Activated naive CD4-positive, alpha-beta T cell treated with anti-CD3 and anti-CD28 coated beads, Interleukin-2, amount 10 ng/mL, durations not matched to agents 7 days and 5 days (primary cell): ENCODE measurements at regions of chr1 and their contacts with region 1.

Region 1: GRCh38 chr1:167059045-167059808 is 30.9 kb downstream of the GPA33 start:
- DNase-seq: peak; percentile 81
- H3K4me3 Mint-ChIP-seq: no peak overlapping the region
- H3K27ac Mint-ChIP-seq: no peak overlapping the region
- H3K4me1 Mint-ChIP-seq: peaks cover 7% of the 10 kb centered on the region
- H3K27me3 Mint-ChIP-seq: no peaks in the 10 kb centered on the region

Region 2: GRCh38 chr1:166875734-166876539 is 183.3 kb before region 1 on chr1 and contains the start of gene TADA1:
- CTCF ChIA-PET with region 1: interaction called, 146 read pairs
- DNase-seq: peak; percentile 99
- H3K4me3 Mint-ChIP-seq: peak within 1 kb of the TSS; percentile 97
- H3K27ac Mint-ChIP-seq: peak within 1 kb of the TSS; percentile 99
- H3K4me1 Mint-ChIP-seq: peaks cover 55% of the 10 kb centered on the region
- H3K27me3 Mint-ChIP-seq: peaks cover 6% of the 10 kb centered on the region

Region 3: DNA sequence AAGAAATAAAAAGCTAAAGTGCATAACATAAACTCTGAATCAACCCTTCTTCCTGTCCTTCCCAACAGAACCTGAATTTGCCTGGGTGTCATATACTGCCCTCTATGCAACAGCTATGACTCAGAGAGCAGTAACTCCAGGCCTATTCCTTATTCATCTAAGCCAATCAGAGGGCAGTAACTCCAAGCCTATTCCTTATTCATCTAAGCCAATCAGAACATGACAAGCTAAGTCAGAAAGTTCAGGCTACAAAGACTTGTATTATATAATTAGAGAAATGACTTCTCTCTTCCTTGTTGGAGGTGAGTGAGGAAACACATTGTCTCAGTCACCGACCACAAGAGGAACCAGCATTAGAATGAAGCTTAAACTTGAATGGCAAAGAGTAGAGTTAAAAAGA is 157.0 kb before region 1 on chr1:
- CTCF ChIA-PET with region 1: interaction called, 682 read pairs
- DNase-seq: no peak
- H3K4me3 Mint-ChIP-seq: no peak overlapping the region
- H3K27ac Mint-ChIP-seq: no peak overlapping the region
- H3K4me1 Mint-ChIP-seq: peaks cover 14% of the 10 kb centered on the region
- H3K27me3 Mint-ChIP-seq: peaks cover 25% of the 10 kb centered on the region

Region 4: DNA sequence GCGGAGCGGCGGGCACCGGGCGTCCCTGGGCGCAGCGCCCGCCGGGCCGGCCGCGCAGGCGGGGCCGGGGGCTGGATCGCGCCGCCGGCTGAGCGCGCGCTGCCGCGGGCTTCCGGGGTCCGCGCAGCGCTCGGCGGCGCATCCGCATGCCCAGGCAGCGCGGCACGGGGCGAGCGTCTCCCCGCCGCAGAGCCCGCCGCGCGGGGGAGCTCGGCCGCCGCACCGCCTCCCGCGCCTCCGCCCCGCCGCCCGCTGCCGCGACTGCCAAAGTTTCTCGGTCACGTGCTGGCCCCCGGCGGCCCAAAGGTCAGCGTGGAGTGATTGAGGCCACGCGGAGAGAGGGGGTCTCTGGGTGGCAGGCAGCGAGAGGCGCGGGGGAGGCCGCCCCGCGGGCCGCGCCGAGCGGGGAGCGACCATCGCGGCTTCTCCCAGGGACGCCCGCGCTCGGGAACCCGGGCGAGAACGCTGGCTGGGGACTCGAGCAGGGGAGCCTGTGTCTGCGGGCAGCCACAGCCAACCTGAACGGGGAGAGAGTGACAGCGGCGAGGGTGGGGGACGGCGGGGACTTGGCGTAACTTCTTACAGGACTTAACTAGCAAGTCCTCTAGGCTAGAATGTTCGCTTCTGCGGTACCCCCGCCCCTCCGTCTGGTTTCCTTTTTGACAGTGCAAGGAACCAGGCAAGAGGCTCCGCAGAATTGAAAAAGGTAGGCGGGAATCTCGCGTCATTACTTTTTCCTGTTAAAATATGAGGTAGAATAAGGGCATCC is 83.7 kb before region 1 on chr1 and contains the start of gene ILDR2:
- CTCF ChIA-PET with region 1: interaction called, 28 read pairs
- DNase-seq: peak; percentile 77
- H3K4me3 Mint-ChIP-seq: peak within 1 kb of the TSS; percentile 74
- H3K27ac Mint-ChIP-seq: peak within 1 kb of the TSS; percentile 2
- H3K4me1 Mint-ChIP-seq: peaks cover 44% of the 10 kb centered on the region
- H3K27me3 Mint-ChIP-seq: peaks cover 52% of the 10 kb centered on the region

Region 5: DNA sequence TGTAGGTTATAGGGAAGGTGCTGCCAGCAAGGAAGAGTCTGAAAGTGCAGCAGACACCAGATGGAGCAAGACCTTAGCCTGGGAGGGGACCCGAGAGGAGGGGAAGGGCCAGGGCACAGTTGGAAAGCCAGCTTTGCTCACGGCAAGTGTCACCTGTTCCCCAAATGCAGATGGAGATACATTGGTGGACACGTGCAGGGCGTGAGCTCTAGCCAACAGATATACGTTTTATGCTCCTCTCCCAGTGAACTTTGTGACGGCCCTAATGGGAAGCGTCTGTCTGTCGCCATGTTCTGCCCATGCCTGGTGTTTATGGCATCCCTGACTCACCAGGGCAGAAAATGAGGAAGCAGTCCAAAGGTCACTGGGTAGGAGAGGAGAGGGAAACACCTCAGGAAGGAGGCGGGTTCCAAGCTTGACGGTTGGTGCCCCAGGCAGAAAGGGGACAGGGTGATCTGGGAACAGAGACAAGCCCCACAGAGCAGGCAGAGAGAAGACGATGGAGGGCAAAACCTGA is 23.3 kb after region 1 on chr1:
- CTCF ChIA-PET with region 1: interaction called, 10 read pairs
- DNase-seq: no peak
- H3K4me3 Mint-ChIP-seq: no peak overlapping the region
- H3K27ac Mint-ChIP-seq: no peak overlapping the region
- H3K4me1 Mint-ChIP-seq: no peaks in the 10 kb centered on the region
- H3K27me3 Mint-ChIP-seq: peaks cover 16% of the 10 kb centered on the region

Region 6: DNA sequence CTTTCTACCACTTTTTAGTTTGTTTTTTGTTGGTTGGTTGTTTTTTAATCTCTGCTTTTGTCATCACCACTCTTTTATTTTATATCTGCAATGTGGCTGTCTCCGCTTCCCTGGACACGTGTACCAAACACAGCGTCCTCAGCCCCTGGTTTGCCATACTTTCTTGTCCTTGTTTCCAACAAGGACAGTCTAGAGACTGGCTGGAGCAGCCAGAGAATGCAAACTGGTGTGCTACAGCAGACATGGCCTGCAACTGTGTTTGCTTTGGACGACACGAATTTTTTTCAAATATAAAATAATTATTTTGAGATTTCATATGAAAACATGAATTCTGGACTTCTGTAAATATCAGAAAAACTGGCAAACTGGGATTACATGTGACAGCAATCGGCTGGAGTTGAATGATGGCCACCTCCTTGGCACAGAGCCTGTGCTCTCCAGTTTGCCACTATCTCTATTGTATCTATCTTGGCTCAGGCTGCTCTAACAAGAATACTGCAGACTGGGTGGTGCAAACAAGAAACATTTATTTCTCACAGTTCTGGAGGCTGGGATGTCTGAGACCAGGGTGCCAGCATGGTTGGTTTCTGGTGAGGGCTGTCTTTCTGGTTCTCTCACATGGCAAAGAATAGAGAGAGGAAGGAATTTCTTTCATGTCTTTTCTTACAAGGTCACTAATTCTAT is 126.9 kb after region 1 on chr1:
- CTCF ChIA-PET with region 1: no interaction called
- DNase-seq: no peak
- H3K4me3 Mint-ChIP-seq: no peak overlapping the region
- H3K27ac Mint-ChIP-seq: no peak overlapping the region
- H3K4me1 Mint-ChIP-seq: no peaks in the 10 kb centered on the region
- H3K27me3 Mint-ChIP-seq: peaks cover 26% of the 10 kb centered on the region

Region 7: DNA sequence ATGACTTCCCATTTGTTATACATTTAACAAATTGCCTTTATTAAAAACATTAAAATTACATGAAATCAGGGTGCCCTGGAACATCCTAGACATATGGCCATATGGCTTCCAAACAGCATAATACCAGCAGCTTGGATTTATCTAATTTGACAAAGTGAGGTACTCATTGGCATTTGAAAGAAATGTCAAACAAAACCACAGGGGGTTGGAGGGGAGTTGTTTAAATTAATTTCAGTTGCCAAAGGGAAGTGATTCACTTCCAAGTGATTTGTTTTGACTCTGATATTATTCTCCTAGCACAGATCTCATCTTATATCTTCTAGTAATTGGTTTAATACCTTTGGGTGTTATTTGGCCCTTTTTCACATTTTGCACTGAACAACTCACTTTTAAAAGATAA is 136.9 kb after region 1 on chr1:
- CTCF ChIA-PET with region 1: no interaction called
- DNase-seq: no peak
- H3K4me3 Mint-ChIP-seq: no peak overlapping the region
- H3K27ac Mint-ChIP-seq: no peak overlapping the region
- H3K4me1 Mint-ChIP-seq: no peaks in the 10 kb centered on the region
- H3K27me3 Mint-ChIP-seq: peaks cover 6% of the 10 kb centered on the region